ENCODE measurements at regions of chr1 and their contacts with region 1.

Region 1: GRCh38 chr1:46461809-46462448 is 27.7 kb upstream of the DMBX1 start:
- DNase-seq: no peak

Region 2: GRCh38 chr1:46425726-46426125 is 36.2 kb before region 1 on chr1:
- intact Hi-C with region 1: no loop called
- DNase-seq: no peak

Region 3: GRCh38 chr1:46491443-46492268 is 29.7 kb after region 1 on chr1:
- intact Hi-C with region 1: loop called in 1 of 2 experiments (anchors 1 kb)
- DNase-seq: peak; percentile 55